ENCODE measurements at regions of chr6 and their contacts with region 1.

Region 1: GRCh38 chr6:99425647-99426453 is 742 bp upstream of the PNISR start:
- DNase-seq: peak; percentile 82
- ATAC-seq: peak; percentile 60
- H3K4me3 Mint-ChIP-seq: peak overlapping the region; percentile 91
- H3K27ac Mint-ChIP-seq: peak overlapping the region; percentile 99
- H3K4me1 Mint-ChIP-seq: peaks cover 57% of the 10 kb centered on the region
- H3K27me3 Mint-ChIP-seq: no peaks in the 10 kb centered on the region

Region 2: DNA sequence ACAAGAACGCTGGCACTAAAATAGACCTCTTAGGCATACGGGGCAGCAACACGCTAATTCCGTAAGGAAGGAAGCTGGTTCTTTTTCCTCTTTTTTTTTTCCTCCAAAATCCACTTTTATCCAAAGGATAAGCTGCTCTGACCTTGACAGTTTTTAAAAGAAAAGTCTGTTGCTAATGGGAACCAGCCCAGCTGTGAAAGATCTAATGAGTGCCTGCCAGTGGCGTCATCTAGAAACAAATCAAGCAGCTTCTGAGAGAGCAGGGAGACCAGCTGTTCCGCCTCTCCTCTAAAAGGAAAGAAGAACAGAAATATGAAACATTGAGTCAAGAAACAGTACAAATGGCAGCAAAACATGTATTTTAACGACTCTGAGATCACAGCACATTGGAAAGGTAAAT is 155.0 kb before region 1 on chr6:
- CTCF ChIA-PET with region 1: no interaction called
- POLR2A ChIA-PET with region 1: no interaction called
- intact Hi-C with region 1: no loop called
- DNase-seq: no peak
- ATAC-seq: no peak
- H3K4me3 Mint-ChIP-seq: no peak overlapping the region
- H3K27ac Mint-ChIP-seq: no peak overlapping the region
- H3K4me1 Mint-ChIP-seq: no peaks in the 10 kb centered on the region
- H3K27me3 Mint-ChIP-seq: peaks cover 9% of the 10 kb centered on the region

Region 3: GRCh38 chr6:99330159-99330558 is 95.7 kb before region 1 on chr6:
- CTCF ChIA-PET with region 1: interaction called, 7 read pairs
- POLR2A ChIA-PET with region 1: no interaction called
- intact Hi-C with region 1: loop called (anchors 1 to 2 kb)
- DNase-seq: peak; percentile 80
- ATAC-seq: peak; percentile 98
- H3K4me3 Mint-ChIP-seq: no peak overlapping the region
- H3K27ac Mint-ChIP-seq: no peak overlapping the region
- H3K4me1 Mint-ChIP-seq: peaks cover 3% of the 10 kb centered on the region
- H3K27me3 Mint-ChIP-seq: peaks cover 4% of the 10 kb centered on the region

Region 4: GRCh38 chr6:99402448-99402847 is 23.4 kb before region 1 on chr6:
- CTCF ChIA-PET with region 1: interaction called, 3 read pairs
- POLR2A ChIA-PET with region 1: interaction called, 3 read pairs
- intact Hi-C with region 1: loop called in 1 of 2 experiments (anchors 2 kb)
- DNase-seq: no peak
- ATAC-seq: no peak
- H3K4me3 Mint-ChIP-seq: no peak overlapping the region
- H3K27ac Mint-ChIP-seq: peak overlapping the region; percentile 37
- H3K4me1 Mint-ChIP-seq: peaks cover 2% of the 10 kb centered on the region
- H3K27me3 Mint-ChIP-seq: no peaks in the 10 kb centered on the region

Region 5: DNA sequence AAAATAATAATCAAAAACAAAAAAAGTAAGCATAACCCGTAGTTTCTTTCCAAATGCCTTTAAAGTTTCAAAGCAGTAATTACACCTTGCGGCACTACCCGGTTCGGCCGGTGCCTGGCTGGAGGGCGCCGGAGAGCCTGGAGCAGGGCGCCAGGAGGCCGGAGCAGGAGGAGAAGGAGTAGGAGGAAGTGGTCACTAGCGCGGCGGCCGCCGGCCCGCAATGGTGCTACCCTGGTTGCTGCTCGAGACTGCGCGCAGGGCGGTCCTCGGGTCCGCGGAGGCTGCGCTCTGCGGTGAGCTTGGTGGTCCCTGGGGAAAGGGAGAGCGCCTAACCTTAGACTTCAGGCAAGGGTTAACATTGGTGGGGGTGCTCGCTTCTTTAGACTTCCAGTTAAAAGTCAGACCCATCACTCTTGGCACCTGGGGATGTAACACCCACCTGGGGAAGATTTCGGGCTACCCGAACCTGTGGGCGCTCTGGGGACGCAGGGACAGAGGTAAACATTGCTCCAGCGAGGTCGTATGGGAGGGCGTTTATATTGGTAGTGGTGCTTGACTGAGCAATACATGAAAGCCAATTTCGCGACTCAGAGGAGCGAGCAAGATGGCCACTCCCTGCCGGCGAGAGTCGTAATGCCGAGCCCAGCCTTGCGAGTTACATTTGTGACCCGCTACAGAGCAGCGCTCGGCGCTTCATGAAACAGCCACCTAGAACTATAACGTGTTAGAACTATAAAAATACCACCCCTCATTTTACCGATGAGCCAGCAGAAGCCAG is 95.2 kb after region 1 on chr6:
- CTCF ChIA-PET with region 1: no interaction called
- POLR2A ChIA-PET with region 1: no interaction called
- intact Hi-C with region 1: loop called in 1 of 2 experiments (anchors 1 kb)
- DNase-seq: peak; percentile 89
- ATAC-seq: peak; percentile 92
- H3K4me3 Mint-ChIP-seq: peak overlapping the region; percentile 90
- H3K27ac Mint-ChIP-seq: peak overlapping the region; percentile 99
- H3K4me1 Mint-ChIP-seq: peaks cover 17% of the 10 kb centered on the region
- H3K27me3 Mint-ChIP-seq: no peaks in the 10 kb centered on the region